Mammary epithelial cell (primary cell): ENCODE measurements at regions of chr5 and their contacts with region 1.

Region 1: DNA sequence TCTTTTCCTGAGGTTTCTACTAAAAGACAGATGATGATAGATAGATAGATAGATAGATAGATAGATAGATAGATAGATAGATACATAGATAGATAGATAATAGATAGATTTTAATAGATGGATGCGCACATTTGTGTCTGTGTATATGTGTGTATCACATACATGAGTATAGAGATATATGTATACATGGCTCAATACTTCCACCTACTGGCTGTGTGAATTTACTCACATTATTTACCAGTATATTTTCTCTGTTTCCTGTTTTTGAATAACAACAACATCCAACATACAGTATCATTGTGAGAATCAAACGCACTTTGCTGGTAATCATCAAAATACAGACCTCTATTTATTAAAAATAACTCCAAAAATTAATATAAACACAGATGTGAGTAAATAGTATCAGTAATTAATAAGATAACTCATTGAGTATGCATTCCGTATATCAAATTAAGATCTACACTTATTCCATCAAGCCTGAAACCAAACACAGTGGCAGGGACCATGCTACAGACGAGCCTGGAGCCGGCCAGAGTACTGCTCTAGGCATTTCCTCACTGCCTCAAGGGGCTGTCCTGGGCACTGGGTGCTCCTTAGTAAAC is 338.0 kb downstream of the SEMA5A start:
- DNase-seq: peak; percentile 23
- H3K4me3 ChIP-seq: no peak overlapping the region
- H3K27ac ChIP-seq: no peak overlapping the region
- H3K4me1 ChIP-seq: peaks cover 22% of the 10 kb centered on the region
- H3K27me3 ChIP-seq: no peaks in the 10 kb centered on the region
- CTCF ChIP-seq: peak; percentile 42 to 51

Region 2: GRCh38 chr5:8773046-8773615 is 434.8 kb before region 1 on chr5:
- CTCF ChIA-PET with region 1: no interaction called
- dilution Hi-C with region 1: no loop called
- in situ Hi-C with region 1: loop called in 1 of 2 experiments (anchors 10 kb)
- intact Hi-C with region 1: no loop called
- DNase-seq: peak; percentile 49
- H3K4me3 ChIP-seq: no peak overlapping the region
- H3K27ac ChIP-seq: no peak overlapping the region
- H3K4me1 ChIP-seq: peaks cover 10% of the 10 kb centered on the region
- H3K27me3 ChIP-seq: no peaks in the 10 kb centered on the region
- CTCF ChIP-seq: no peak

Region 3: DNA sequence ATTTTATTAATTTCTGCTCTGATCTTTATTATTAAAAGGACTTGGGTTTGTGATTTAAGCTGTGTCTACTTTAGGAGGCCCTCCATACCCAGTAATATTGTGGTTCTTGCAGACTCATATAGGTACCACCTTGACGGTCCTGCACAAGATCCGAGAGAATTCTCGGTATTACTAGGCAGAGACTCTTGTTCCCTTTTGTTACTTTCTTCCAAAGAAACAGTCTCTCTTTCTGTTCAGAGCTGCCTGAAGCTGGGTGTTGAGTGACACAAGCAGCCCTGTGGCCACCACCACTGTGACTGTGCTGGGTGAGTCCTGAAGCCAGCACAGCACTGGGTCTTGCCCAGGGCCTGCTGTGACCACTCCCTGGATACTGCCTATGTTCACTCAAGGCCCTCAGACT is 328.7 kb before region 1 on chr5:
- CTCF ChIA-PET with region 1: no interaction called
- dilution Hi-C with region 1: no loop called
- in situ Hi-C with region 1: loop called in 1 of 2 experiments (anchors 10 kb)
- intact Hi-C with region 1: loop called (anchors 1 kb)
- DNase-seq: no peak
- H3K4me3 ChIP-seq: no peak overlapping the region
- H3K27ac ChIP-seq: no peak overlapping the region
- H3K4me1 ChIP-seq: no peaks in the 10 kb centered on the region
- H3K27me3 ChIP-seq: no peaks in the 10 kb centered on the region
- CTCF ChIP-seq: no peak

Region 4: DNA sequence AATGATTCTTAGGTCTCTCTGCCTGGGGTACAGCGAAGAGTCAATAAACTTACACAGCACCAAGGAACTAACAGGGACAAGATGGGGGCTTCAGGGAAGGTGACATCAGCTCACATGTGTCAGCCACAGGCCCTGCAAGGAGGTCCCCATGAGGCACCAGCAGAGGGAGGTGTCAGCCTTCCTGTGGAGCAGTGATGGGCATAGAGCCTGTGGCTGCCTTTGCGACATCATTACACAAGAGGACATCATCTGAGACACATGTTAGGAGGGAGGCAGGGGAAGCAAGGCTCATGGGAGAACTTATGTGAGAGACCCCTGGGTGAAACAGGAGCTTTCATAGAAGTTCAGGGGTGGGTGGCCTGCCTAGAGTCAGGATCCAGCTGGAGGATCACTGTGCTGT is 51.6 kb before region 1 on chr5:
- CTCF ChIA-PET with region 1: interaction called, 9 read pairs
- dilution Hi-C with region 1: no loop called
- in situ Hi-C with region 1: no loop called
- intact Hi-C with region 1: loop called (anchors 1 kb)
- DNase-seq: peak; percentile 46
- H3K4me3 ChIP-seq: no peak overlapping the region
- H3K27ac ChIP-seq: no peak overlapping the region
- H3K4me1 ChIP-seq: no peaks in the 10 kb centered on the region
- H3K27me3 ChIP-seq: no peaks in the 10 kb centered on the region
- CTCF ChIP-seq: peak; percentile 62 to 81